ENCODE measurements at regions of chr6 and their contacts with region 1.

Region 1: GRCh38 chr6:41318654-41319565 is 16.5 kb upstream of the NCR2 start:
- DNase-seq: peak; percentile 59
- H3K4me3 ChIP-seq: peak overlapping the region; percentile 55
- H3K27ac ChIP-seq: no peak overlapping the region
- H3K27me3 ChIP-seq: peaks cover 23% of the 10 kb centered on the region
- CTCF ChIP-seq: peak; percentile 100

Region 2: DNA sequence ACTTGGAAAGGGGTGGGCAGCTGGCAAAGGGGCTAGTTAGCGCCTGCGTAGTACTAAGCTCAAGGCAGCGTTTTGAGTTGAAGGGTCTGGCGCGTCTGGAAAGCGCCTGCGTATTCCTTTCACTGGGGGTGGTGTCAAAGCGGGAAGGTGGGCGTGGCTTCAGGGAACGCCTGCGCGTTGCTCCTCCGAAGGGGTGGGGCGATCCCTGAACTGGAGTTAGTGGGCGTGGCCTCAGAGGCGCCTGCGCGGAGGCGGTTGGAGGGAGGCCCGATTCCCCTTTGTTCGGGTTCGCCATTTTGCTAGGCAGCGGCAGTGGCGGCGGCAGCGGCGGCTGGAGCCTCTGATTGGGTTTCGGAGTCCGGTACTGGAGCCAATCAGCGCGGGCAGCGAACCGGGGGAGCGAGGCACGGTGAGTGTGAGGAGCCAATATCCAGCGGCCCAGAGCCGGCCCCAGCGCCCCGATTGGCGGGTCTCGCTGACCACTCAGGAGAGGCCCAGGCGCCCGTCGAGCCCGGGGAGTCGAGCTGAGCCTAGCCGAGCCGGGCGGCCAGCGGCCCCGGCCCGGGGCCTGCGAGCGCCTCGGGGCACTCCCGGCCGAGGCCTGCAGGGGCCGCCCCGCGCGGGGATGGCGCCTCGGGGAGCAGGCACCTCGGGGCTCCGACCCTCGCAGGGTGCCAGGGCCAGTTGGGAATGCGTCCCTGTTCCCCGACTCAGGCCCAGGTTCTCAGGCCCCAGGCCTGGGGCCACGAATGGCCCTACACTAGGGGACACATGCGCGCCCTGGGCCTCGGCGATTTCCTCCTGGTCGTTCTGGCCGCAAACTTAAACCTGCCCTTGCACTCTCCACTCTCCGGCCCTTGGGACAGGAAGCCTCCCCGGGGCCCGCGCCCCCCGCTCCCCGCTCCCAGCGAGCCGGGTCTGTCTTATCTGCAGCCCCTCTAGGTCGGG is 246.0 kb before region 1 on chr6 and contains the start of gene NFYA:
- CTCF ChIA-PET with region 1: interaction called, 10 read pairs
- POLR2A ChIA-PET with region 1: no interaction called
- DNase-seq: peak; percentile 99
- H3K4me3 ChIP-seq: peak within 1 kb of the TSS; percentile 85
- H3K27ac ChIP-seq: peak within 1 kb of the TSS; percentile 99
- H3K27me3 ChIP-seq: no peaks in the 10 kb centered on the region
- CTCF ChIP-seq: peak; percentile 30
- polyA plus RNA-seq, gene NFYA: 10.1 and 13.4 TPM in 2 replicates

Region 3: DNA sequence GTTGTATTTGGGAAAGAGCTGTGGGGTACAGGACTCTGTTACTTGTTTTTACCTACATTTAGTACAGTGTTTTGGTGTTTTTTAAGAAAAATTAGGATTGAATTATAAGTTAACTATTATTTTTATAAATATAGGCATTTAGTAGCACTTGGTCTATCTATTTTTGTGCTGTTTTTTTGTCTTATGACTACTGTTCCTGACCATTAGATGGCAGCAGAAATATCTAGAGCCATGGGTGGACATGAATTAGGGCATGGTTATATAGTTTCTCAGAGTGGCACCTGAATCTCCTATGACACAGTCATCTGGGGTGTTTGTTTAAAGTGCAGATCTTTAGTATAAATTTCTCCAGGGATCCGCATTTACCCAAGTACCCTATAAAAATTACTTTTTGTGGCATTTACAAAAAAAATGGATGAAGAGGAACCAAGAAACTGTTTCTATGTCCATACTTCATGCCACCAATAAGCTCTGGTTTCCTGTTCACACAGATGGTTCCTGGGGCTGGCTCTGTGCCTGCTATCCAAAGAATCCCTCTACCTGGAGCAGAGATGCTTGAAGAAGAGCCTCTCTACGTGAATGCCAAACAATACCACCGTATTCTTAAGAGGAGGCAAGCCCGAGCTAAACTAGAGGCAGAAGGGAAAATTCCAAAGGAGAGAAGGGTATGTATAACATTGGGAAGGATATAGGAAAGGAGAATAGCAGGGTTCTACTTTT is 226.3 kb before region 1 on chr6:
- CTCF ChIA-PET with region 1: interaction called, 12 read pairs
- POLR2A ChIA-PET with region 1: interaction called, 4 read pairs
- DNase-seq: no peak
- H3K4me3 ChIP-seq: no peak overlapping the region
- H3K27ac ChIP-seq: no peak overlapping the region
- H3K27me3 ChIP-seq: no peaks in the 10 kb centered on the region
- CTCF ChIP-seq: peak; percentile 56

Region 4: DNA sequence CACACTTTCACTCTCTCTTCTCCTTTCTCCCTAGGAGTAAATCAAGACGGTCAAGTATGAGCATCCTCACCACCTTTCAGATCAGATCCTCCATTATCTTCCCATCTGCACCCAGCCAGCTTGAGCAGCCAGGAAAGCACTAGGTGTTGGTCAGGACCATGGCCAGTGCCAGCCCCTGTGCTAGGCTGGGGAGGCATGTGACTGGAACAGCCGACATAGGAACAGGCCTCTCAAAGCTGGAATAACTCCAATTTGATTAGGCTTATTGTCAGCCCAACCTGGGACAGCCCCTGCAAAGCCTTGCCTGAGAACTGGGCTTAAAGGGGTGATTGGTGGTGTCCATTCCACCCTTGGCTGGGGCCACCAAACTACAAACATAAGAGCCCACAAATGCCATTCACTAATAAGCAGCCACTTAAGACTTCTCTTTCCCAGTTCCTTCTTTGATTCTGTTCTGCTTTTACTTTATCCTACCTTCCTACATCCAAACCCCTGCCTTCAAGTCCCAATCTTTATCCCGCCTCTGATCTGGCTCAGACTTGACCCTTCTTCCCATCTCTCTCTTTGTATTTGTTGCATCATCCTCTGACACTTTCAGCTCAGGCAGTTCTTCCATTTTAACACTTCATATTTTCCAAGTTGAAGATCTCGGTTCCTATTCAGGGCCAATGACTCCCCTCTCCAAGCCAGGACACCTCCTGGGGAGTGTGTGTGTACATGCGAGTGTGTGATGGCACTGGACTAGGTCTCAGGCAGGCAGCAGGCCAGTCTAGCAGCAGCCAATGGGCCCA is 151.5 kb before region 1 on chr6:
- CTCF ChIA-PET with region 1: no interaction called
- POLR2A ChIA-PET with region 1: no interaction called
- DNase-seq: no peak
- H3K4me3 ChIP-seq: no peak overlapping the region
- H3K27ac ChIP-seq: no peak overlapping the region
- H3K27me3 ChIP-seq: peaks cover 6% of the 10 kb centered on the region
- CTCF ChIP-seq: no peak

Region 5: DNA sequence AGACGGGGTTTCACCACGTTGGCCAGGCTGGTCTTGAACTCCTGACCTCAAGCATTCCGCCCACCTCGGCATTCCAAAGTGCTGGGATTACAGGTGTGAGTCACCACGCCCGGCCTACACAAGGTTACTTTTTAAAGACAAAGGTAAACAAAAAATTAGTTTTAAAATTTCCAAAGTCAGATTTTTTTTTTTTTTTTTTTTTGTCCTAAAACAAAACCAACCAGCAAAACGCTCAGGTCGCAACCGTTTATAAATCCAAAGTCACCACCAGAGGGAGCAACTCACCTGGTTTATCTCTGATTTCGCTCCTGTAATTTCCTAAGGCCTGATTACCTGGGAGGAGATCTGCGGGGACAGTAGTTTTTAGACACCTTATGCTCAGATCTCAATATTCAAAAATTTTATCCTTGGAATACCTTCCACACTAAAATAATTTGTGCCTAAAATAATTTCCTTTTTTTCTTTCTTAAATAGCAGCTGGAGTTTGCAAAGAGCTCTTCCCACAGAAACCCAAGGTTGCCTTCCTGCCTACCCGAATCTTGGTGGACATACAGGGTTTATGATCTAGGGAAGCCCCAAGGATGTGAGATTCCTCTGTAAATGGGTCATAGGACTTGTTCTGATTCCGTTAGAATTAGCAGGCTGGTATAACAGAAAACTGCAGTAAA is 12.6 kb before region 1 on chr6:
- CTCF ChIA-PET with region 1: interaction called, 98 read pairs
- POLR2A ChIA-PET with region 1: no interaction called
- DNase-seq: no peak
- H3K4me3 ChIP-seq: no peak overlapping the region
- H3K27ac ChIP-seq: no peak overlapping the region
- H3K27me3 ChIP-seq: peaks cover 15% of the 10 kb centered on the region
- CTCF ChIP-seq: peak; percentile 64

Region 6: GRCh38 chr6:41334482-41335040 is 15.7 kb after region 1 on chr6:
- CTCF ChIA-PET with region 1: interaction called, 14 read pairs
- POLR2A ChIA-PET with region 1: no interaction called
- DNase-seq: no peak
- H3K4me3 ChIP-seq: no peak overlapping the region
- H3K27ac ChIP-seq: no peak overlapping the region
- H3K27me3 ChIP-seq: peaks cover 53% of the 10 kb centered on the region
- CTCF ChIP-seq: peak; percentile 47

Region 7: DNA sequence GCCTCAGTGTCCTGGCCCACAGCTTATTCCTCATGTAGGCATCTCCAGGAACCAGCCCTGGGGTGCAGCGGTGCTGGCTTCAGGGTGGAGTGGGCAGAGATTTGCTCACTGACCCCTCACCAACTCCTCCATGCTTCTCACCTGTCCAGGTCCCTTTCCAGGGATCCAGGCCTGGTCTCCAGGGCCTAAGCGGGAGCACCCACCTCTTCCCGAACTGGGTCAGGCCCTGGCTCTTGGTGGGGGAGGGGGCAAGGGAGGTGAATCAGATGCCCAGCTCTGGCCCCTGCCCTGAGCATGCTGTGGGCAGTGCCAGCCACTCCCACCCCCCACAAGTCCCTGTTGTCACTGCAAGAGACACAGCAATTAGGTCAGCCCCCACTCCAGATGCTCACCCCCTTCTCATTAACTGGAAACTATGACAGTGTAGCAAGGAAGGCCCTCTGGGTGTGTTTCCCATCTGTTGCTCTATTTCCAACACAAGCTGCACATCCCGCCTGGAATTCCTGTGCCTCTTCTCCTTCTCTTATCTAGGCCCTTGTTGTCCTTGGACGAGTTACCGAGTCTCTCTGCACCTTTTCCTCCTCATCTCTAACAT is 356.4 kb after region 1 on chr6:
- CTCF ChIA-PET with region 1: interaction called, 16 read pairs
- POLR2A ChIA-PET with region 1: no interaction called
- DNase-seq: no peak
- H3K4me3 ChIP-seq: no peak overlapping the region
- H3K27ac ChIP-seq: no peak overlapping the region
- H3K27me3 ChIP-seq: peaks cover 39% of the 10 kb centered on the region
- CTCF ChIP-seq: no peak

Region 8: DNA sequence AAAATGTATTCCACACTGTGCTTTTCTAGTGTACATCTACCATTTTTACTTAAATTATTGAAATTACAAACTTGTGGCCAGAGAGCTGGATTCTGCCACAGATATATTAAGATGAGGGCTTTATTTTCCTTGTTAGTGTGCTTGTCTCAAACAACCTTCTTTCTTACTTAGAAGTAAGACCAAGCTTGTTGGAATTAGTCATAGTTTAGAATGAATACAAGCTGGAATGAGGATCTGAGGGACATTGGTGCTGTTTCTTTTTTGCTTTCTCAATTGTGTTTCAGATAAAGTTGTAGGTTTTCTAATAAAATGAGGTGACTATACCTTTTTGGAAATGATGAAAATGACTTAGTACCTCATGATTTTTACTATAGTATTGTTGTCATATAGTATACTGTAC is 1285.2 kb after region 1 on chr6:
- CTCF ChIA-PET with region 1: no interaction called
- POLR2A ChIA-PET with region 1: no interaction called
- DNase-seq: no peak
- H3K4me3 ChIP-seq: no peak overlapping the region
- H3K27ac ChIP-seq: no peak overlapping the region
- H3K27me3 ChIP-seq: no peaks in the 10 kb centered on the region
- CTCF ChIP-seq: no peak